Naive thymus-derived CD4-positive, alpha-beta T cell (primary cell): ENCODE measurements at regions of chr3 and their contacts with region 1.

Region 1: DNA sequence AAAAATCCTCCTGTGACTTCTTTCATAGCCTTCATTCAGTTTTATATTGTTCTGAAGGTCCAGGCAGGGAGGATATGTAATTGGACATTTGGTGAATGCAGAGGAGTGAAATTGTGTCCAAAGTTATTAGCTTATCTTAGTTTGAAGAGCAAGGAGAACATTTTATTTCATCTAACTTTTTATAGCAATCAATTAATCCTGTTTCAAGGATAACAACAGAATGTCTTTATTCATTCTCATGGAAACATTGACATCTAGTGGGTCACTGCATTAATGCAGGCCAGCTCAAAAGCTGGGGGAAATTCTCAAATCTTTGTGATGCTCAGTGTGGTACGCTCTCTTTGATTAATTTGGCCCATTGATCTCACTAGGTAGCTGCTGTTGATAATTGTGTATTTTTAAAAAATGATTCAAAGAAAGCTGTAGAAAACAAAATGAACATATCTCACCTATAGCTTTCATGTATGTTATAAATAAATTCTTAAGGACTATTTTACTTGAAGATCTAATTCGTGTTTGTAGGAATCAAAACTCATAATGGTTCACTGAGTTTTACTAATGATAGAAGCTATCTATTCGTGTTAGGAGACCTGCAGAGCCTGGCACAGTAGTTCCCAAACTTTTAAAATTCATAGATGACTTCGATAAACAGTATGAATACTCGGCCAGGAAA is 150.8 kb upstream of the KCNMB2 start:
- DNase-seq: peak in 5 of 9 donors; percentile 23 to 44 (median 41)
- ATAC-seq: peak; percentile 56
- H3K4me3 ChIP-seq: no peak overlapping the region
- H3K4me3 Mint-ChIP-seq: no peak overlapping the region
- H3K27ac ChIP-seq: no peak overlapping the region
- H3K27ac Mint-ChIP-seq: peak overlapping the region in 1 of 9 donors; percentile 4
- H3K4me1 ChIP-seq: no peaks in the 10 kb centered on the region
- H3K4me1 Mint-ChIP-seq: no peaks in the 10 kb centered on the region
- H3K27me3 ChIP-seq: no peaks in the 10 kb centered on the region
- H3K27me3 Mint-ChIP-seq: peaks cover 0 to 12% (median 4%) of the 10 kb centered on the region in 5 donors

Region 2: DNA sequence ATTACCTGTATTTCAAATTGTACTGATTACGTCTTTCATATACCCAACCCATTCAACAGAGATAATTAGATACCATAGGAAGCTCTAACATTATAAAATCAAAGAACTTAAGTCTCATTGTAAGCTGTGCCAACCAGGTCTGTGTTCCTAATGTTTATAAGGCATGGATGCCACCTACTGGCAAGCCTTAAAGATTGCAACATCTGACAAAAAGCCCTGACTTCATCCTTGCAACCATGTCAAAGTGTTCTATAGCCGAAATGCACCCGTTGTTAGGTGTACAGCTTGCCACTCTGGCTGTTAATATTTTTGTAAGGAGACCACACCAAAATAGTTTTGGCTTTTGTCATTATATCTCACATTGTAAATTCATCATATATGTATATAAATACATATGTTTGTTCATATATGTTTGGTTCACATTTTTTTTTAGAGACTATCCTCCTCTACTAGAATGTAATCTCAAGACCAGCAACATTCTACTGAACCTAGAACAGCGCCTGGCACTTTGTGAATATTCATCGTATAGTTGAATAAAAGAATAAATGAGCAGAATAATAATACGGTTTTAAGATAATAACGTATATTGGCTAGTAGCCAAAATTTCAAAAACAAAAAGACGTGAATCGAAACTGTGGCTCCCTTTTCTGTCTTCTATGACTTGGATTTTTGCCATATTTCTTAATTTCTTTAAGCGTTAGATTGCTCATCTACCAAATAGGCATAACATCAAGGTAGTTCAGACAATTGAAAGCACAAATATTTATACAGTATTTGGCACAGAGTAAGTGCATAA is 1446.2 kb before region 1 on chr3:
- CTCF ChIA-PET with region 1: no interaction called
- POLR2A ChIA-PET with region 1: no interaction called
- intact Hi-C with region 1: loop called in 1 of 2 experiments (anchors 1 kb)
- DNase-seq: peak in 7 of 9 donors; percentile 12 to 60 (median 43)
- ATAC-seq: peak; percentile 75
- H3K4me3 ChIP-seq: no peak overlapping the region
- H3K4me3 Mint-ChIP-seq: no peak overlapping the region
- H3K27ac ChIP-seq: no peak overlapping the region
- H3K27ac Mint-ChIP-seq: no peak overlapping the region
- H3K4me1 ChIP-seq: no peaks in the 10 kb centered on the region
- H3K4me1 Mint-ChIP-seq: no peaks in the 10 kb centered on the region
- H3K27me3 ChIP-seq: peaks cover 0 to 3% of the 10 kb centered on the region in 2 donors
- H3K27me3 Mint-ChIP-seq: peaks cover 4 to 21% (median 10%) of the 10 kb centered on the region in 5 donors

Region 3: DNA sequence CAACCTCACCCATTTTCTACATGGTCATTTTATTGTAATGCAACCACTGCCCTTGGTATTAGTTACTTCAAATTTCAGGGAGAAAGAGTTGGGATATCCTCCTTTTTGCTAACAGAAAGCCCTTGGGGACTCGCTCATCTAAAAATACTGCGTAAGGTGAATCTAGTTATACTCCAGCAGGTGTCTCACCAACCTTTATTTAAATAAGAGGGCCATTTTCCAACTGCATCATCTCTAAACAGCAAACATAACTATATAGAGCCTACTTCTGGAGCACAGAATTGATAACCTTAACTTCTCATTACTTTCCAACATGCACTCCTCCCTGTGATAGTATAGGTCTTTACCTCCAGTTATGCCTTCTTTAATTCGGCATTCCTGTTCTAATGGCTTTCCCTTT is 1265.6 kb before region 1 on chr3:
- CTCF ChIA-PET with region 1: no interaction called
- POLR2A ChIA-PET with region 1: no interaction called
- intact Hi-C with region 1: loop called in 1 of 2 experiments (anchors 2 kb)
- DNase-seq: peak in 1 of 9 donors; percentile 31
- ATAC-seq: no peak
- H3K4me3 ChIP-seq: no peak overlapping the region
- H3K4me3 Mint-ChIP-seq: peak overlapping the region in 1 of 10 donors; percentile 28
- H3K27ac ChIP-seq: no peak overlapping the region
- H3K27ac Mint-ChIP-seq: peak overlapping the region in 6 of 9 donors; percentile 10 to 52 (median 26)
- H3K4me1 ChIP-seq: peaks cover 5 to 33% of the 10 kb centered on the region in 2 donors
- H3K4me1 Mint-ChIP-seq: peaks cover 46 to 97% (median 91%) of the 10 kb centered on the region in 7 donors
- H3K27me3 ChIP-seq: no peaks in the 10 kb centered on the region
- H3K27me3 Mint-ChIP-seq: no peaks in the 10 kb centered on the region

Region 4: DNA sequence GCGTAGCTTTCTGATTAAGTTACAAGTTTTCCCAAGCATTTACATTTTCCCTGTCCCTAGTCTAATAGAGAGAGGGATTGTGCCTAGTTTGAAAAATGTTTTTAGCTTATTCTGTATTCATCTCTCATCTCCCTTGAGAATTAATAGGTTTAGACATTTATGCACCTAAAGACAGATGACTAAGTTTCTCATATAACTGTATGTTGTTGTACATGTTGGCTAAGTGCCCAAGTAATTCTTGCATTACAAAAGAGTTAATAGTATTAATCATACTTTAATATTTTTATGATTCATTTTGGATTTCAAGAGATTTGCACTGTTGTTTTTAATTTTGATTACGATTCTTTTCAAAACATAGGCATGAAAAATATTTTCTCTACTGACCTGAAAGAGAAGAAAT is 1079.2 kb before region 1 on chr3:
- CTCF ChIA-PET with region 1: no interaction called
- POLR2A ChIA-PET with region 1: no interaction called
- intact Hi-C with region 1: no loop called
- DNase-seq: no peak
- ATAC-seq: no peak
- H3K4me3 ChIP-seq: no peak overlapping the region
- H3K4me3 Mint-ChIP-seq: no peak overlapping the region
- H3K27ac ChIP-seq: no peak overlapping the region
- H3K27ac Mint-ChIP-seq: no peak overlapping the region
- H3K4me1 ChIP-seq: no peaks in the 10 kb centered on the region
- H3K4me1 Mint-ChIP-seq: peaks cover 0 to 4% (median 0%) of the 10 kb centered on the region in 7 donors
- H3K27me3 ChIP-seq: no peaks in the 10 kb centered on the region
- H3K27me3 Mint-ChIP-seq: peaks cover 0 to 4% (median 0%) of the 10 kb centered on the region in 5 donors

Region 5: DNA sequence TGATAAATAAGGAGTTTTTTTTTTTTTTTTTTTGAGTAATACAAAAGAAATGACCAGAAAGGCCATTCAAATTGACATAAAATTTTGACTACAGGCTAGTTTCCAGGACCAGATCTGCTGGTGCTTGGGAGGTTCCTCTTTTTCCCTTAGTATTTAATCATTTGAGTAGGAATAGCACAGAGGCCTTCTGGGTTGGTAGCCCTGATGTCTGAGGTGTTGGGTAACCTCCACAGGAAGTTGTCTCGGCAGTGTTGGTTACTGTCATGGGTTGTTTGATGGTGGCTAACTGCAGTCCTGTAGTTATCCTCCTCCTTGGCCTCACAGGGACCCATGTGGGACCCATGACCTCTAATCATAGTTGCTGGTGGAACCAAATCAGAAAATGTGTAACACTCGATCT is 1358.5 kb after region 1 on chr3:
- CTCF ChIA-PET with region 1: no interaction called
- POLR2A ChIA-PET with region 1: no interaction called
- intact Hi-C with region 1: no loop called
- DNase-seq: no peak
- ATAC-seq: peak; percentile 41
- H3K4me3 ChIP-seq: no peak overlapping the region
- H3K4me3 Mint-ChIP-seq: no peak overlapping the region
- H3K27ac ChIP-seq: no peak overlapping the region
- H3K27ac Mint-ChIP-seq: no peak overlapping the region
- H3K4me1 ChIP-seq: no peaks in the 10 kb centered on the region
- H3K4me1 Mint-ChIP-seq: peaks cover 0 to 14% (median 0%) of the 10 kb centered on the region in 7 donors
- H3K27me3 ChIP-seq: no peaks in the 10 kb centered on the region
- H3K27me3 Mint-ChIP-seq: no peaks in the 10 kb centered on the region